Cardiac septum (tissue), 1 donor: ENCODE measurements at regions of chr22 and their contacts with region 1.

Region 1: DNA sequence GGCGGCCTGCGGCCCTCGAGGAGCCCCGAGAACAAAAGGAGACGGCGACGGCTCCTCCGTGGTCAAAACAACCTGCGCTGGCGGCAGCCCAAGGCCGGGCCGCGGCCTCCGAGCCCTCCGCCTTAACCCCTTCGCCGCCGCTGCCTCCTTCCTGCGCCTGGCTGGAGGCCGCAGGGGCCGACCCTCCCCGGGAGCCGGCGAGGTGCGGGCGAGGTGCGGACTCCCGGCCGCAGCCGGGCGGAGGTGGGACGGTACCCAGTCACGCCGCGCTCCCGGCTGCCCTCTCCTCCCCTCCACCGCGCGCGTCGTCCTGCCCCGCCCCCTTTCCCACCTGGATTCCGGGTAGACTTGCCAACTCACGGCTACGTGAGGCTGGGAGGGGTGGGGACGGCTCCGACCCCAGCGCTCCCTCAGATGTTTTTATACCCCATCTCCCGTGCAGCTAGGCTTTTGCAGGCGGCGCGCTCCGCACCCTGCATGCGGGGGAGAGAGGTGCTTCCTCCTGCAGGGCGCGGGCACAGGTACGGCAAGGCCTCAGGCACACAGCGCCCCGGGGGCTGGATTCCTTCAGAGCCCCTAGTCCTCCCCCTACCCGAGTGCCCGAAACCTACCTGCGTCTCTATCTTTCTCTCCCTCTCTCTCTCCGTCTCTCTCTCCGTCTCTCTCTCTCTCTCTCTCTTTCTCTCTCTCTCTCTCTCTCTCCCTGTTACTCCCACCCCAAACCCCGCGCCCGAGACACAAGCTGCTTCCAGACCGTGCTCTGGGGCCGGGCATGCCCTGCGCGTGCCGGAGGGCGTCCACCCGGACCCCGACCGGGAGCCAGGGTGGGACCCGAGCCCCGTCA is 2.0 kb downstream of the PDGFB start:
- DNase-seq: no peak

Region 2: GRCh38 chr22:39283322-39284004 is 40.6 kb after region 1 on chr22:
- intact Hi-C with region 1: loop called (anchors 2 kb)
- DNase-seq: no peak